Stomach (tissue), 19 donors: ENCODE measurements at regions of chr4 and their contacts with region 1.

Region 1: GRCh38 chr4:37977471-37978247 is 17.5 kb downstream of the PTTG2 start:
- DNase-seq: peak; percentile 74 to 91
- H3K4me3 ChIP-seq: peak overlapping the region; percentile 66 to 86 (median 80)
- H3K27ac ChIP-seq: peak overlapping the region; percentile 91 to 97 (median 94)
- H3K4me1 ChIP-seq: peaks cover 10 to 61% (median 35%) of the 10 kb centered on the region in 4 donors
- H3K27me3 ChIP-seq: no peaks in the 10 kb centered on the region
- CTCF ChIP-seq: peak in 5 of 7 experiments; percentile 16 to 62 (median 55)
- EP300 ChIP-seq: no peak
- POLR2A ChIP-seq: no peak

Region 2: DNA sequence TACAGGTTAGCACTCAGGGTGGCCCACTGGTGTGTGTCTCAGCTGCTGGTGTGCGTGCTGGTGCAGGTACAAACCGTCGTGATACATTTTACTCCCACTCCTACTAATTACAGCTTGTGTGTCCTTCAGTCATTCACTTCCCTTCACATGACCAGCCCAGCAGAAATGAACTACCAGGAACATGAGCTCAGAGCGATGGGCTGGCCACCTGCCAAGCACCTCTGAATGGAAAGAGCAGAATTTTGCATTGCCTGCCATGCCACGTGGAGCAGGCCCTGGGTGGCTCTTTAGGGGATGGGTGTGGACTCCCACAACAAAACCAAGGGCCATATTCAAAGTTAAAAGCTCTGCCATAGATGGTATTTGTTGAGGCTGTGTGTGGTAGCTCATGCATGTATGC is 210.1 kb before region 1 on chr4:
- intact Hi-C with region 1: no loop called
- DNase-seq: peak; percentile 77 to 86
- H3K4me3 ChIP-seq: no peak overlapping the region
- H3K27ac ChIP-seq: peak overlapping the region in 4 of 5 donors; percentile 3 to 46 (median 28)
- H3K4me1 ChIP-seq: peaks cover 17 to 31% (median 26%) of the 10 kb centered on the region in 4 donors
- H3K27me3 ChIP-seq: no peaks in the 10 kb centered on the region
- CTCF ChIP-seq: no peak
- EP300 ChIP-seq: no peak
- POLR2A ChIP-seq: no peak

Region 3: GRCh38 chr4:37826295-37827029 is 151.2 kb before region 1 on chr4 and contains the start of gene PGM2:
- intact Hi-C with region 1: loop called (anchors 5 kb)
- DNase-seq: peak; percentile 89 to 97
- H3K4me3 ChIP-seq: peak within 1 kb of the TSS; percentile 74 to 95 (median 88)
- H3K27ac ChIP-seq: peak within 1 kb of the TSS; percentile 83 to 90 (median 88)
- H3K4me1 ChIP-seq: peaks cover 8 to 36% (median 23%) of the 10 kb centered on the region in 4 donors
- H3K27me3 ChIP-seq: no peaks in the 10 kb centered on the region
- CTCF ChIP-seq: no peak
- EP300 ChIP-seq: no peak
- POLR2A ChIP-seq: peak in 1 of 4 donors; percentile 75
- total RNA-seq, gene PGM2: 8.7 to 53.1 (median 14.0) TPM

Region 4: GRCh38 chr4:37873386-37873785 is 104.3 kb before region 1 on chr4:
- intact Hi-C with region 1: no loop called
- DNase-seq: peak in 1 of 2 donors; percentile 47
- H3K4me3 ChIP-seq: no peak overlapping the region
- H3K27ac ChIP-seq: peak overlapping the region in 1 of 5 donors; percentile 77
- H3K4me1 ChIP-seq: peaks cover 0 to 34% (median 12%) of the 10 kb centered on the region in 4 donors
- H3K27me3 ChIP-seq: no peaks in the 10 kb centered on the region
- CTCF ChIP-seq: no peak
- EP300 ChIP-seq: no peak
- POLR2A ChIP-seq: no peak

Region 5: GRCh38 chr4:37889849-37890800 is 87.5 kb before region 1 on chr4:
- intact Hi-C with region 1: loop called (anchors 5 kb)
- DNase-seq: peak; percentile 75 to 83
- H3K4me3 ChIP-seq: peak overlapping the region; percentile 76 to 94 (median 90)
- H3K27ac ChIP-seq: peak overlapping the region; percentile 68 to 97 (median 85)
- H3K4me1 ChIP-seq: peaks cover 14 to 51% (median 31%) of the 10 kb centered on the region in 4 donors
- H3K27me3 ChIP-seq: peaks cover 0 to 44% (median 9%) of the 10 kb centered on the region in 3 donors
- CTCF ChIP-seq: peak in 2 of 7 experiments; percentile 15 to 17
- EP300 ChIP-seq: peak; percentile 4
- POLR2A ChIP-seq: no peak

Region 6: GRCh38 chr4:37928426-37929416 is 48.9 kb before region 1 on chr4:
- intact Hi-C with region 1: no loop called
- DNase-seq: no peak
- H3K4me3 ChIP-seq: no peak overlapping the region
- H3K27ac ChIP-seq: no peak overlapping the region
- H3K4me1 ChIP-seq: peaks cover 0 to 11% (median 9%) of the 10 kb centered on the region in 4 donors
- H3K27me3 ChIP-seq: no peaks in the 10 kb centered on the region
- CTCF ChIP-seq: no peak
- EP300 ChIP-seq: no peak
- POLR2A ChIP-seq: no peak

Region 7: DNA sequence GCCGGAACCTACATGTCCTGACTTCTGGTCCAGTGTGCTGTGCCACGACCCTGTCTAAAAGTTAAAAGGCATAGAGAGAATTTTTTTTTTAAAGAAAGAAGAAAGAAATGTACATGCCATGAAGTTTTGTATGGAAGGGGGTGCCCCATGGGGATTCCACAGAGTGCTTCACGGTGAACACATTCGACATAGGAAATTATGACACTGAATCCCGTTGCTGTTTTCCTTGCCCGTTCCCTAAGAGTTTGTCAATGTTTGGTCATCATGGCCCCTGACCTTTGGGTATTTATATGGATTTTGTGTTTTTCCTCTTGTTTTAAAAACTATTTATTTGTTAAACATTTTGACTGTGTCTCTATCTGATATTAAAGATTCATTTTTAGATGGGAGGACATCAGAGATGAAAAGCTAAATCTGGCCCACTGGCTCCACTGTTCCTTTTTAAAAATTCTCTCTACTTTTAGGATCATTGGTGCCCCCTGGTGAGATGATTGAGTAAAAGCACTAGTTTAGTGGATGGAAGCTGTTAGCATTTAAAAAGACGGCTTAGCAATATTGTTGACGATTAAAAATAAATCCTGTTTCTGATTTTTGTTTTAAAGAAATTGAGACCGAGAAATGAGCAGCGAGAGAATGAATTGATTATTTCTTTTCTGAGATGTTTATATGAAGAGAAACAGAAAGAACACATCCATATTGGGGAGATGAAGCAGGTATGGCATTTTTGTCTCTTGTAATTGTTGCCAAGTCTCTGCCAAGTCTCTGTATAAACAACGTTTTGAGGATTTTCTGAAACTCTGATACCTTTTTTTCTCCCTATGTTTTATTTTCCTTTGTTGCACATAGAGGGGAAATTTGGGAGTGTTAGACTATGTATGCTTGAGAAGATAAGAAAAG is 57.6 kb after region 1 on chr4:
- intact Hi-C with region 1: loop called (anchors 10 kb)
- DNase-seq: peak in 1 of 2 donors; percentile 86
- H3K4me3 ChIP-seq: no peak overlapping the region
- H3K27ac ChIP-seq: peak overlapping the region in 2 of 5 donors; percentile 16 to 31
- H3K4me1 ChIP-seq: peaks cover 0 to 14% (median 7%) of the 10 kb centered on the region in 4 donors
- H3K27me3 ChIP-seq: no peaks in the 10 kb centered on the region
- CTCF ChIP-seq: peak in 5 of 7 experiments; percentile 28 to 72 (median 63)
- EP300 ChIP-seq: no peak
- POLR2A ChIP-seq: no peak